Endothelial cell of umbilical vein (primary cell): ENCODE measurements at regions of chr11 and their contacts with region 1.

Region 1: GRCh38 chr11:12963792-12964536 is 45.2 kb upstream of the RASSF10 start:
- DNase-seq: peak; percentile 58
- H3K4me3 ChIP-seq: no peak overlapping the region
- H3K27ac ChIP-seq: no peak overlapping the region
- H3K4me1 ChIP-seq: no peaks in the 10 kb centered on the region
- H3K27me3 ChIP-seq: peaks cover 7 to 12% of the 10 kb centered on the region in 2 experiments
- CTCF ChIP-seq: peak; percentile 78 to 81
- POLR2A ChIP-seq: no peak

Region 2: GRCh38 chr11:12343526-12343925 is 620.4 kb before region 1 on chr11:
- CTCF ChIA-PET with region 1: no interaction called
- POLR2A ChIA-PET with region 1: no interaction called
- dilution Hi-C with region 1: no loop called
- intact Hi-C with region 1: no loop called
- DNase-seq: no peak
- H3K4me3 ChIP-seq: no peak overlapping the region
- H3K27ac ChIP-seq: no peak overlapping the region
- H3K4me1 ChIP-seq: no peaks in the 10 kb centered on the region
- H3K27me3 ChIP-seq: no peaks in the 10 kb centered on the region
- CTCF ChIP-seq: no peak
- POLR2A ChIP-seq: no peak

Region 3: GRCh38 chr11:13016415-13016814 is 52.5 kb after region 1 on chr11:
- CTCF ChIA-PET with region 1: interaction called, 12 read pairs
- POLR2A ChIA-PET with region 1: no interaction called
- dilution Hi-C with region 1: no loop called
- intact Hi-C with region 1: no loop called
- DNase-seq: peak; percentile 37
- H3K4me3 ChIP-seq: no peak overlapping the region
- H3K27ac ChIP-seq: no peak overlapping the region
- H3K4me1 ChIP-seq: no peaks in the 10 kb centered on the region
- H3K27me3 ChIP-seq: peaks cover 28 to 60% of the 10 kb centered on the region in 2 experiments
- CTCF ChIP-seq: no peak
- POLR2A ChIP-seq: no peak

Region 4: DNA sequence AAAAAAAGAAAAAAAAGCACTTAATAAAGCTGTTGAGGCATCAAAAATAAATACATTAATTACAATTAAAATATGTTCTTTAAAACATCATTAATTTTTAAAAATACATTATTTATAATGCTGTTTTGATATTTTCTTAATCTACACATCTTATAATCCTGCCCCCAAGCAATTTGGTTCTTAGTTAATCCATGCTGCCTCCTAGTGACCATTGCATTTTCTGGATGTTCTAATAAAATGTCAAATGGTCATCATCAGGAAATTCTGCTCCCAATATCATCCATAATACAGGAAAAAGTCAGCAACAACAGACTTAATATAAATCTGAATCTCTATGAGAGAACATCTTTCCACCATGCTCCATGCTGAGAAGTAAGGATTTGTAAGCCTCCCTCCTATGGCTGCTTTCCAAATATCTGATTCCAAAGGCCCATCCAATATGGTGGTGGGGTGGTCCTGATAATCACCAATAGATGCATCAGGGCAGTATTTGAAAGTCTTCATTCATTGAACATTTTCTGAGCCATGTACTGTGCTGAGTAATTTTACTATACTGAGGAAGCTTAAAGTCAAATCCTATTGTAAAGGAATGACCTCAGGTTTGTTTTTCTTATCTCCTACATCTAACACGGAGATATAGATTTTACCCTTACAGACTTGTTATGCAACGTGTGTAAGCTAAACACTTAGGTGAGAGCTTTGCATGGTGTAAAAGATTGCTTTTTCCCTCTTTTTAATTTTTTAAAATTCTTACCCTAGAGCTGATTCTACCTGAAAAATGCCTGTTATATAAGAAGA is 189.0 kb after region 1 on chr11:
- CTCF ChIA-PET with region 1: interaction called, 265 read pairs
- POLR2A ChIA-PET with region 1: no interaction called
- dilution Hi-C with region 1: loop called (anchors 25 kb)
- intact Hi-C with region 1: loop called (anchors 1 kb)
- DNase-seq: peak; percentile 55
- H3K4me3 ChIP-seq: no peak overlapping the region
- H3K27ac ChIP-seq: no peak overlapping the region
- H3K4me1 ChIP-seq: peaks cover 4% of the 10 kb centered on the region
- H3K27me3 ChIP-seq: peaks cover 0 to 6% of the 10 kb centered on the region in 2 experiments
- CTCF ChIP-seq: peak; percentile 28 to 35
- POLR2A ChIP-seq: no peak

Region 5: GRCh38 chr11:13210424-13210823 is 246.5 kb after region 1 on chr11:
- CTCF ChIA-PET with region 1: interaction called, 14 read pairs
- POLR2A ChIA-PET with region 1: no interaction called
- dilution Hi-C with region 1: no loop called
- intact Hi-C with region 1: no loop called
- DNase-seq: peak; percentile 70
- H3K4me3 ChIP-seq: no peak overlapping the region
- H3K27ac ChIP-seq: no peak overlapping the region
- H3K4me1 ChIP-seq: peaks cover 24% of the 10 kb centered on the region
- H3K27me3 ChIP-seq: no peaks in the 10 kb centered on the region
- CTCF ChIP-seq: peak; percentile 51 to 52
- POLR2A ChIP-seq: no peak

Region 6: DNA sequence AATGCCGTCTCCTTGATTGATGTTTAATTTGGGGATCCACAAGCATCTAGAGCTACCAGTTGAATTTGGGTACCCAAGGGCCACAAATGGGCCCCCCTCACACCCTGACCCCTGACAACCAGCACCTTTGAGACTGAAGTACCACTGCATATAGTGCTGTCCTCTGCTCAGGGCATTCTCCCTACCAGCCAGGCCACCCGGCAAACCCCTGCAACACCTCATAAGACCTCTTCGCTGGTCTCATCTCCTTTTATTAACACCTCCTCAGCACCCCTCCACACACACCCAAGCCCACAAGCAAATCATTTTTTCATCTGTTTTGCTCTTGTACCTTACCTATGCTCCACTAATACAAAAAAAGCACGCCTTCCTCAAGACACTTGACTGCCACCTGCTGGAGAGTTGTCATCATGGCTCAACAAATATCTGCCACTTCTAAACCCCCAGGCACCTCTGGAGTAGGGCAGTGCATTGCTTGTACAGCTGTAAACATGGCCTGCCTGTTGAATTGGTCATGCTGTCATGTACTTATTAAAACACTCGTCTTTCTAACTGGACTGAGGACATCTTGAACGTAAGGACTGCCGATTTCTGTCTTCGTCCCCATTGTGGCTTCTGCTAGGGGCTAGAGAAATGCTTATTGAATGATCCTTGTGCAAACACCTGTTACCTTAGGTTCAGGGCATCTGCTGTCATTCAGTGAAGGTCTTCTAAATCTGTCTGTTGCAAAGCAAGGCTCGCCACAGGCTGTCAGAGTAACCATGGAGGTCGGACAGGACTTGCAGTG is 380.2 kb after region 1 on chr11:
- CTCF ChIA-PET with region 1: interaction called, 11 read pairs
- POLR2A ChIA-PET with region 1: no interaction called
- dilution Hi-C with region 1: no loop called
- intact Hi-C with region 1: loop called (anchors 1 kb)
- DNase-seq: peak; percentile 70
- H3K4me3 ChIP-seq: no peak overlapping the region
- H3K27ac ChIP-seq: no peak overlapping the region
- H3K4me1 ChIP-seq: peaks cover 8% of the 10 kb centered on the region
- H3K27me3 ChIP-seq: no peaks in the 10 kb centered on the region
- CTCF ChIP-seq: peak; percentile 73 to 78
- POLR2A ChIP-seq: no peak